GM12878 (cell line): ENCODE measurements at regions of chr6 and their contacts with region 1.

Region 1: GRCh38 chr6:30914076-30914853 is at the start of gene VARS2:
- DNase-seq: peak; percentile 72
- ATAC-seq: peak; percentile 96
- H3K4me3 ChIP-seq: peak within 1 kb of the TSS; percentile 91
- H3K27ac ChIP-seq: peak within 1 kb of the TSS; percentile 87
- H3K4me1 ChIP-seq: peaks cover 4% of the 10 kb centered on the region
- H3K27me3 ChIP-seq: no peaks in the 10 kb centered on the region
- CTCF ChIP-seq: peak; percentile 40 to 56 (median 49); a peak in 4 of 6 replicates
- EP300 ChIP-seq: no peak
- POLR2A ChIP-seq: peak; percentile 87
- RAD21 ChIP-seq: peak; percentile 59
- polyA plus RNA-seq, gene VARS2: 3.8 to 4.3 TPM

Region 2: GRCh38 chr6:30722280-30723112 is 191.8 kb before region 1 on chr6:
- CTCF ChIA-PET with region 1: interaction called, 5 read pairs
- POLR2A ChIA-PET with region 1: interaction called, 3 read pairs
- RAD21 ChIA-PET with region 1: interaction called, 10 read pairs
- SMC1A ChIA-PET with region 1: no interaction called
- in situ Hi-C with region 1: no loop called
- intact Hi-C with region 1: no loop called
- DNase-seq: no peak
- ATAC-seq: 0 out of 3 replicates have a peak, but pooled peaks have one; percentile 0
- H3K4me3 ChIP-seq: peak overlapping the region; percentile 88
- H3K27ac ChIP-seq: peak overlapping the region; percentile 67
- H3K4me1 ChIP-seq: peaks cover 12% of the 10 kb centered on the region
- H3K27me3 ChIP-seq: no peaks in the 10 kb centered on the region
- CTCF ChIP-seq: peak; percentile 90 to 95 (median 92)
- EP300 ChIP-seq: no peak
- POLR2A ChIP-seq: no peak; the same call in 1 of the 2 replicates
- RAD21 ChIP-seq: peak; percentile 86

Region 3: DNA sequence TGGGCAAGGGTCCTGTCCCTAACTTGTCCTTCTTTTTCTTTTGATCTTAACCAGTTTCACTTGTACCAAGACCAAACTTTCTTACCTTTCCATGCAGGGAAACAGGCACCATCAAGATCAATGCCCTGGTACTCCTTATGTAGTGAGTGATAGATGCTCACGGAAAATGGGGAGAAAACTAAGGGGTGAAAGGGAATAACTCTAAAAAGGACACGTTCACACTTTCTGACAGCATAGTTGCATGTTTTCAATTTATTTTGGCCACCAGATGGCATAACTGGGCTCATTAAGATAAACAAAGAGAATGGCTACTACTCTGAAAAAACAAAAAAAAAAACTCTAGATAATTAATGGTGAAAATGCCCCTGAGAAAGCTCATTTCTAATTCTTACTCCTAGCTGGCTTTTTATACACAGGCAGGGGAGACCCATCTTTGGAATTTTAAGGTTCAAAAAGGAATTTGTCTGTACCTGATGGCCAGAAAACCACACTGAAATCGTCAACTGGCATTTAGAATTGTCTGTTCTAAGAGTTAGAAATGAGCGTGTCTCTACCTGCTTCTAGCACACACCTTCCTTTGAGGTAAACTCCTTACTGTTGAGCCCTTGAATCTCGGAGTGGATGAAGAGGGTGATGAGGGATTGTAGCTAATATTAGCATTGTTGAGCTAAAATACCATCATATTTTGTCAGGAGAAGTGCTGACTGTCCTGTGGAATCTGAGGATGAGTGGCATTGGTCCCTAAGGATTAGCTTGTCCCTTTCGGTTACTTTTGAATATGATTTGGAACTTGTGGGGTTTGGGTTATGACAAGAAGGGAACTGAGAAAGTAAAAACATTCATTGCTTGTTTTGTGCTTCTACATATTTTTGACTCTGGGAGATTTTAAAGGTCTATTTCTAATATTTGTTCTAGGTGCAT is 92.1 kb before region 1 on chr6:
- CTCF ChIA-PET with region 1: interaction called, 122 read pairs
- POLR2A ChIA-PET with region 1: interaction called, 19 read pairs
- RAD21 ChIA-PET with region 1: interaction called, 90 read pairs
- SMC1A ChIA-PET with region 1: interaction called, 141 read pairs
- in situ Hi-C with region 1: no loop called
- intact Hi-C with region 1: no loop called
- DNase-seq: no peak
- ATAC-seq: peak; percentile 52
- H3K4me3 ChIP-seq: no peak overlapping the region
- H3K27ac ChIP-seq: peak overlapping the region; percentile 42
- H3K4me1 ChIP-seq: peaks cover 21% of the 10 kb centered on the region
- H3K27me3 ChIP-seq: no peaks in the 10 kb centered on the region
- CTCF ChIP-seq: peak; percentile 50 to 61 (median 52); a peak in 5 of 6 replicates
- EP300 ChIP-seq: 0 out of 4 replicates have a peak, but pooled peaks of 1 of the 2 experiments have one; percentile 15
- POLR2A ChIP-seq: no peak
- RAD21 ChIP-seq: peak; percentile 54

Region 4: DNA sequence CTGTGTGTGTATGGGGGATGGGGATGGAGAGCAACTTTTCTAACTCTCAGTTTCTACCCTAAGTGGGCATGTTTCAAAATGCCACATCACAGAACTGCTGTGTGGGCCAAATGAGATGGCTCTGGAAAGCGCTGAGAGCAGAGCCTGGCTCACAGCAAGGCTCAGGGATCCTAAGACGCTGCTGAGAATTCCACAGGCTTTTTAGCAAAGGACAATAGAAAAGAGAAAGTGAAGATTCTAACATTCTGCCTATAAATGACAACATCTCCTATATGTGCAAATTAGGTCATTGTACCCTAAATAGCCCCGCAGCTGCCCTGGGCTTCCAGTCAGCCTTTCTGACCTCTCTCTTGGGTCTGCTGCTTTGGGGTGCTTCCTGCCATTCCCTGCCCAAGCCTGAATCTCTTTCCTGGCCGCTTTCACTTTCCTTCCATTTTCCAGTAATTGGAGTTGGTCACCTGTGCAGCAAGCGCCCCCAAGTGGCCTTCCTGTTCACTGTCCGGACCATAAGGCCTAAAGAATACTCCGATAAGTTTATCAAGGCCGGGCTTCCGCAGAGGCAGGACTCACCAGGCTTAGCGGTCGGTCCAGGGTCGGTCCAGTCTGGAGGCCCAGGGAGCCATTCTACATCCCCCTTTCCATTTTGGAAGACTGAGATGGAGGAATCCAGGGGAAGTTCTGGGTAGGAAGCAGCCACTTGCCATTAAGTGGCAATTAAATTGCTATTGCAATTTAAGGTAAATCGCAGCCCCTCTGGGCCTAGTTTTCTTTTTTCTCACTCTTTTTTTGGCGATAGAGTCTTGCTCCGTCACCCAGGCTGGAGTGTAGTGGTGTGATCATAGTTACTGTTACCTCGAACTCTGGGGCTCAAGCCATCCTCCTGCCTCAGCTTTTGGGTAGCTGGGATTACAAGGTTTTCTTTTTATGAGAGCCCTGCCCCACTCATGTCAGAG is 36.6 kb before region 1 on chr6:
- CTCF ChIA-PET with region 1: interaction called, 71 read pairs
- POLR2A ChIA-PET with region 1: interaction called, 50 read pairs
- RAD21 ChIA-PET with region 1: interaction called, 138 read pairs
- SMC1A ChIA-PET with region 1: interaction called, 40 read pairs
- in situ Hi-C with region 1: no loop called
- intact Hi-C with region 1: loop called (anchors 2 kb)
- DNase-seq: peak; percentile 59
- ATAC-seq: peak; percentile 91
- H3K4me3 ChIP-seq: peak overlapping the region; percentile 61
- H3K27ac ChIP-seq: peak overlapping the region; percentile 68
- H3K4me1 ChIP-seq: peaks cover 21% of the 10 kb centered on the region
- H3K27me3 ChIP-seq: no peaks in the 10 kb centered on the region
- CTCF ChIP-seq: peak; percentile 91 to 95 (median 93); a peak in 5 of 6 replicates
- EP300 ChIP-seq: no peak
- POLR2A ChIP-seq: 0 out of 2 replicates have a peak, but pooled peaks have one; percentile 28
- RAD21 ChIP-seq: peak; percentile 95

Region 5: GRCh38 chr6:30926644-30927043 is 12.4 kb after region 1 on chr6:
- CTCF ChIA-PET with region 1: interaction called, 13 read pairs
- POLR2A ChIA-PET with region 1: no interaction called
- RAD21 ChIA-PET with region 1: no interaction called
- SMC1A ChIA-PET with region 1: interaction called, 3 read pairs
- in situ Hi-C with region 1: no loop called
- intact Hi-C with region 1: no loop called
- DNase-seq: no peak
- ATAC-seq: no peak
- H3K4me3 ChIP-seq: no peak overlapping the region
- H3K27ac ChIP-seq: no peak overlapping the region
- H3K4me1 ChIP-seq: no peaks in the 10 kb centered on the region
- H3K27me3 ChIP-seq: no peaks in the 10 kb centered on the region
- CTCF ChIP-seq: no peak
- EP300 ChIP-seq: no peak
- POLR2A ChIP-seq: no peak
- RAD21 ChIP-seq: no peak

Region 6: DNA sequence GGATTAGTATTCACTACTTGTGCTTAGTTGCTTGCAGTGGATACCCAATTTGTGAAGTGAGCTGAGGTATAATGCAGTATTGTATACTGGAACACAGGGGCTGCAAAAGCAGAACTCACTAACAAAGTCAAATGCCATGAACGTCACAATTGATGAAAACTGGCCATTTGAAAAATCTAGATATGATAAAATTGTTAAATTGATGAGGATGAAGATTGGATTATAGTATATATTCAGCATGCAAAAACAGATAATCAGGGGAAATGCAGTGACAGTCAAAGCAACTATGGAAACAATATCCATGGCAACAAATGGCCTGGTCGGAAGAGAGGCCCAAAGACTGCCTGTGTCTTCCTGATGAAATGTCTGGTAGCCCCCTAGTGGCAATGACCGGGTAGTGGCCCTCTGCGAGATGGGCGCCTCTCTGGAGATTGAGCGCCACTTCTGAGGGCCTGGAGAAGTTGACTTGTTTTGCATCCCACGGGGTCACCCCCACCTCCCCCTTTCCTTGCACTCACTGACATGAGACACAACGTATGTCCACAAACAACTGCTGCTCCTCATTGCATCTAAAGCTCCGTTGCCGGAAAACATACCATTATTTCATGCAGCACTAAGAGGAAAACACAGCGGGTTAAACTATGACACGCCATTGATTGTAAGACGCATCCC is 154.5 kb after region 1 on chr6:
- CTCF ChIA-PET with region 1: interaction called, 115 read pairs
- POLR2A ChIA-PET with region 1: interaction called, 5 read pairs
- RAD21 ChIA-PET with region 1: interaction called, 29 read pairs
- SMC1A ChIA-PET with region 1: interaction called, 43 read pairs
- in situ Hi-C with region 1: no loop called
- intact Hi-C with region 1: loop called (anchors 1 kb)
- DNase-seq: no peak
- ATAC-seq: peak; percentile 99
- H3K4me3 ChIP-seq: no peak overlapping the region
- H3K27ac ChIP-seq: no peak overlapping the region
- H3K4me1 ChIP-seq: no peaks in the 10 kb centered on the region; the same call in 1 of the 2 replicates
- H3K27me3 ChIP-seq: no peaks in the 10 kb centered on the region
- CTCF ChIP-seq: peak; percentile 89 to 93 (median 90); a peak in 5 of 6 replicates
- EP300 ChIP-seq: no peak
- POLR2A ChIP-seq: no peak
- RAD21 ChIP-seq: peak; percentile 76

Region 7: GRCh38 chr6:31094389-31094881 is 180.2 kb after region 1 on chr6:
- CTCF ChIA-PET with region 1: interaction called, 13 read pairs
- POLR2A ChIA-PET with region 1: no interaction called
- RAD21 ChIA-PET with region 1: interaction called, 4 read pairs
- SMC1A ChIA-PET with region 1: interaction called, 5 read pairs
- in situ Hi-C with region 1: no loop called
- intact Hi-C with region 1: no loop called
- DNase-seq: no peak
- ATAC-seq: no peak
- H3K4me3 ChIP-seq: no peak overlapping the region
- H3K27ac ChIP-seq: no peak overlapping the region
- H3K4me1 ChIP-seq: no peaks in the 10 kb centered on the region
- H3K27me3 ChIP-seq: peaks cover 0 to 2% of the 10 kb centered on the region in 2 experiments; a peak in 2 of 4 replicates
- CTCF ChIP-seq: no peak
- EP300 ChIP-seq: no peak
- POLR2A ChIP-seq: no peak
- RAD21 ChIP-seq: no peak

Region 8: GRCh38 chr6:31521835-31522234 is 607.6 kb after region 1 on chr6:
- CTCF ChIA-PET with region 1: no interaction called
- POLR2A ChIA-PET with region 1: no interaction called
- RAD21 ChIA-PET with region 1: no interaction called
- SMC1A ChIA-PET with region 1: no interaction called
- in situ Hi-C with region 1: no loop called
- intact Hi-C with region 1: no loop called
- DNase-seq: no peak
- ATAC-seq: no peak
- H3K4me3 ChIP-seq: no peak overlapping the region
- H3K27ac ChIP-seq: no peak overlapping the region
- H3K4me1 ChIP-seq: no peaks in the 10 kb centered on the region
- H3K27me3 ChIP-seq: no peaks in the 10 kb centered on the region
- CTCF ChIP-seq: no peak
- EP300 ChIP-seq: no peak
- POLR2A ChIP-seq: no peak
- RAD21 ChIP-seq: no peak